B cell (primary cell): ENCODE measurements at regions of chr6 and their contacts with region 1.

Region 1: GRCh38 chr6:28136585-28137504 is 4.8 kb upstream of the ZKSCAN8 start:
- DNase-seq: peak; percentile 89
- ATAC-seq: peak; percentile 52
- H3K4me3 ChIP-seq: peak overlapping the region; percentile 89 to 99 (median 96)
- H3K4me3 Mint-ChIP-seq: peak overlapping the region; percentile 94
- H3K27ac ChIP-seq: peak overlapping the region; percentile 95 to 97
- H3K27ac Mint-ChIP-seq: peak overlapping the region; percentile 95
- H3K4me1 ChIP-seq: peaks cover 24 to 27% of the 10 kb centered on the region in 2 donors
- H3K4me1 Mint-ChIP-seq: peaks cover 60% of the 10 kb centered on the region
- H3K27me3 ChIP-seq: no peaks in the 10 kb centered on the region
- H3K27me3 Mint-ChIP-seq: no peaks in the 10 kb centered on the region
- CTCF ChIP-seq: no peak

Region 2: DNA sequence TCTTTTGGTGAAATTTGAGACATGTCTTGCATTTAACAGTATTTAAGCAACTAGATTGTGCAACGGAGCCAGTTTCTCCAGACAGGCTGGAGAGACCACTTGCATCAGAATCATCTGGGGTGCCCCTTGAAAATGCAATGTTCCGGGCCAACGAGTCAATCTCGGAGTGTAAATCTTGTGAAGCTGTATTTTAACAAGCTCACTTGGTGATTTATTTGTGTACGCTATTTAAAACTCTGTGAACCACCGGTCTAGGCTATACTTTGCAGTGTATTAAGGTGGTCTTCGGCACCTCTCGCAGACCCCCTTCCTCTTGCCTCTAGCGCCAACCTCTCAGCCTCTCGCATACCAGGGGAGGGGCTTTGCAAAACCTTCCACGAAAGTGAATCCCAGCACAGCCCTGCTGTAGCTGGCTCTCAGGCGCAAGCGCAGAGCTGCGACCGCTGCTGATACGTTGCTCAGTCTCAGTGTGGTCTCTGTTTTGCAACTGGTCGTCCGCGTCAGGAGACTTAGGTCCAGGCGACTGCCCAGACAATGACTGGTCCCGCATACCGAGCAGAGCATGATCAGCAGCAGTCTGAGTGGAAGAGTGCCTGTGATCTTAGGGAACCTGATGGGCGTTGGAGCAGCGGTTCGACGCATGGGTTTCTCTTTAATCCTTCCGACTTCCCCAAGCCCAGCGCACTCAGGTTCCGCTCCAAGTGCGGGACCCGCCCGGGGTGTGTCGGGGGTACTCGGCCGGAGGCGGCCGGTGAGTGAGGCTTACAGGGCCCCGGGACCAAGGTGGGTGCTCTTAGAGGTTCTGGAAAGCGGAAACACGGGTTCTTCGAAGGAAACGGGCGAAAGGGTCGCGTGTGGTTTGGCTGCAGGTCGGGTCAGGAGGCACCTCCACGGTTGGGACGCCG is 748.3 kb before region 1 on chr6 and contains the start of gene ZNF391:
- CTCF ChIA-PET with region 1: no interaction called
- POLR2A ChIA-PET with region 1: no interaction called
- intact Hi-C with region 1: loop called (anchors 5 kb)
- DNase-seq: peak; percentile 88
- ATAC-seq: peak; percentile 87
- H3K4me3 ChIP-seq: peak within 1 kb of the TSS; percentile 70 to 97 (median 94)
- H3K4me3 Mint-ChIP-seq: peak within 1 kb of the TSS; percentile 99
- H3K27ac ChIP-seq: peak within 1 kb of the TSS; percentile 64 to 83
- H3K27ac Mint-ChIP-seq: peak within 1 kb of the TSS; percentile 98
- H3K4me1 ChIP-seq: peaks cover 10 to 16% of the 10 kb centered on the region in 2 donors
- H3K4me1 Mint-ChIP-seq: peaks cover 17% of the 10 kb centered on the region
- H3K27me3 ChIP-seq: peaks cover 0 to 2% (median 0%) of the 10 kb centered on the region in 4 experiments
- H3K27me3 Mint-ChIP-seq: peaks cover under 1% of the 10 kb centered on the region
- CTCF ChIP-seq: no peak
- total RNA-seq, gene ZNF391: 4.4 and 7.0 TPM in 2 replicates

Region 3: GRCh38 chr6:28080631-28081485 is 56.0 kb before region 1 on chr6:
- CTCF ChIA-PET with region 1: no interaction called
- POLR2A ChIA-PET with region 1: interaction called, 3 read pairs
- intact Hi-C with region 1: loop called (anchors 1 kb)
- DNase-seq: peak; percentile 98
- ATAC-seq: peak; percentile 67
- H3K4me3 ChIP-seq: peak overlapping the region; percentile 67 to 96 (median 88)
- H3K4me3 Mint-ChIP-seq: peak overlapping the region; percentile 92
- H3K27ac ChIP-seq: peak overlapping the region; percentile 94 to 100
- H3K27ac Mint-ChIP-seq: peak overlapping the region; percentile 98
- H3K4me1 ChIP-seq: peaks cover 10 to 22% of the 10 kb centered on the region in 2 donors
- H3K4me1 Mint-ChIP-seq: peaks cover 36% of the 10 kb centered on the region
- H3K27me3 ChIP-seq: no peaks in the 10 kb centered on the region
- H3K27me3 Mint-ChIP-seq: no peaks in the 10 kb centered on the region
- CTCF ChIP-seq: no peak

Region 4: DNA sequence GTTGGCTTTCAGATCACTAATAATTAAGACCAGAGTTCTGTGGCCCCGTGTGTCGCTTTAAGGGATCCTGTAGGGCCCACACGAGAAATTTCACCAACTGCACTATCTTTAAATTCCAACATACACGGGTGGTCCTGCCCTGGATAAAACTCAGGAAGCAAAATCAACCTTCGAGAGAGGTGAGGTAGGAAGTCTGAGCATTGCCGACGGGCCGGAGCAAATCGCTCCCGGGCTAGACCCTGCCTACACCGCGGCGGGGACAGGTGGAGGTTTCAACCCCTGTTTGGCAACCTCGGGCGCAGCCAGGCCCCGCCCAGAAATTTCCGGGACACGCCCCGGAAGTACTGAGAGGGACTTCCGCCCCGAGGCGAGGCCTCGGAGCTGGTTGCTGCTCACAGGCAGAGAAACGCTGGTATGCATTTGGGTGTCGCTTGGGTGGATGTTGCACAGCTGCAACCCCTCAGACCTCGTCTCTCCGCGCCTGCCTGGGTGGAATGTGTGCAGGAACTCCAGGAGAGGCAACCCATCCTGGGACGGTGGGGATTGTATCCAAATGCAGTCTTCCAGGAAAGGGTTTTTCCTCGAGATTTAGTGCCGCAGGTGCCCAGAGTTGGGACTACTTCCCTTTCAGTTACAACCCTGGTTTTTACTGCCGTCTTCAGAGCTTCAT is 24.7 kb after region 1 on chr6:
- CTCF ChIA-PET with region 1: no interaction called
- POLR2A ChIA-PET with region 1: no interaction called
- intact Hi-C with region 1: loop called (anchors 2 kb)
- DNase-seq: peak; percentile 87
- ATAC-seq: peak; percentile 91
- H3K4me3 ChIP-seq: peak overlapping the region; percentile 34 to 58 (median 47)
- H3K4me3 Mint-ChIP-seq: peak overlapping the region; percentile 84
- H3K27ac ChIP-seq: no peak overlapping the region
- H3K27ac Mint-ChIP-seq: peak overlapping the region; percentile 57
- H3K4me1 ChIP-seq: peaks cover 9 to 12% of the 10 kb centered on the region in 2 donors
- H3K4me1 Mint-ChIP-seq: peaks cover 14% of the 10 kb centered on the region
- H3K27me3 ChIP-seq: no peaks in the 10 kb centered on the region
- H3K27me3 Mint-ChIP-seq: peaks cover 3% of the 10 kb centered on the region
- CTCF ChIP-seq: no peak

Region 5: GRCh38 chr6:28252009-28252975 is 115.4 kb after region 1 on chr6 and contains the start of gene ZKSCAN4:
- CTCF ChIA-PET with region 1: interaction called, 8 read pairs
- POLR2A ChIA-PET with region 1: interaction called, 10 read pairs
- intact Hi-C with region 1: loop called (anchors 1 kb)
- DNase-seq: peak; percentile 89
- ATAC-seq: peak; percentile 90
- H3K4me3 ChIP-seq: peak within 1 kb of the TSS; percentile 59 to 99 (median 94)
- H3K4me3 Mint-ChIP-seq: peak within 1 kb of the TSS; percentile 98
- H3K27ac ChIP-seq: peak within 1 kb of the TSS; percentile 22 to 58
- H3K27ac Mint-ChIP-seq: peak within 1 kb of the TSS; percentile 78
- H3K4me1 ChIP-seq: peaks cover 14 to 20% of the 10 kb centered on the region in 2 donors
- H3K4me1 Mint-ChIP-seq: peaks cover 31% of the 10 kb centered on the region
- H3K27me3 ChIP-seq: peaks cover 0 to 3% (median 2%) of the 10 kb centered on the region in 4 experiments
- H3K27me3 Mint-ChIP-seq: no peaks in the 10 kb centered on the region
- CTCF ChIP-seq: no peak
- total RNA-seq, gene ZKSCAN4: 10.9 and 12.1 TPM in 2 replicates

Region 6: GRCh38 chr6:28349892-28350737 is 213.3 kb after region 1 on chr6 and contains the start of gene ZKSCAN3:
- CTCF ChIA-PET with region 1: interaction called, 33 read pairs
- POLR2A ChIA-PET with region 1: no interaction called
- intact Hi-C with region 1: loop called (anchors 2 kb)
- DNase-seq: peak; percentile 81
- ATAC-seq: peak; percentile 99
- H3K4me3 ChIP-seq: peak within 1 kb of the TSS; percentile 59 to 88 (median 77)
- H3K4me3 Mint-ChIP-seq: peak within 1 kb of the TSS; percentile 92
- H3K27ac ChIP-seq: peak within 1 kb of the TSS; percentile 26 to 58
- H3K27ac Mint-ChIP-seq: peak within 1 kb of the TSS; percentile 83
- H3K4me1 ChIP-seq: peaks cover 10 to 11% of the 10 kb centered on the region in 2 donors
- H3K4me1 Mint-ChIP-seq: peaks cover 23% of the 10 kb centered on the region
- H3K27me3 ChIP-seq: peaks cover 0 to 3% (median 0%) of the 10 kb centered on the region in 4 experiments
- H3K27me3 Mint-ChIP-seq: peaks cover 8% of the 10 kb centered on the region
- CTCF ChIP-seq: no peak
- total RNA-seq, gene ZKSCAN3: 11.0 and 11.9 TPM in 2 replicates

Region 7: GRCh38 chr6:28399350-28400121 is 262.7 kb after region 1 on chr6 and contains the start of gene ZSCAN12:
- CTCF ChIA-PET with region 1: no interaction called
- POLR2A ChIA-PET with region 1: interaction called, 4 read pairs
- intact Hi-C with region 1: loop called (anchors 2 kb)
- DNase-seq: peak; percentile 91
- ATAC-seq: peak; percentile 91
- H3K4me3 ChIP-seq: peak within 1 kb of the TSS; percentile 67 to 96 (median 75)
- H3K4me3 Mint-ChIP-seq: peak within 1 kb of the TSS; percentile 93
- H3K27ac ChIP-seq: peak within 1 kb of the TSS; percentile 35 to 87
- H3K27ac Mint-ChIP-seq: peak within 1 kb of the TSS; percentile 92
- H3K4me1 ChIP-seq: peaks cover 16 to 17% of the 10 kb centered on the region in 2 donors
- H3K4me1 Mint-ChIP-seq: peaks cover 34% of the 10 kb centered on the region
- H3K27me3 ChIP-seq: peaks cover 0 to 17% (median 8%) of the 10 kb centered on the region in 4 experiments
- H3K27me3 Mint-ChIP-seq: peaks cover 40% of the 10 kb centered on the region
- CTCF ChIP-seq: peak; percentile 78
- total RNA-seq, gene ZSCAN12: 14.8 and 15.6 TPM in 2 replicates